ENCODE measurements at regions of chr1 and their contacts with region 1.

Region 1: DNA sequence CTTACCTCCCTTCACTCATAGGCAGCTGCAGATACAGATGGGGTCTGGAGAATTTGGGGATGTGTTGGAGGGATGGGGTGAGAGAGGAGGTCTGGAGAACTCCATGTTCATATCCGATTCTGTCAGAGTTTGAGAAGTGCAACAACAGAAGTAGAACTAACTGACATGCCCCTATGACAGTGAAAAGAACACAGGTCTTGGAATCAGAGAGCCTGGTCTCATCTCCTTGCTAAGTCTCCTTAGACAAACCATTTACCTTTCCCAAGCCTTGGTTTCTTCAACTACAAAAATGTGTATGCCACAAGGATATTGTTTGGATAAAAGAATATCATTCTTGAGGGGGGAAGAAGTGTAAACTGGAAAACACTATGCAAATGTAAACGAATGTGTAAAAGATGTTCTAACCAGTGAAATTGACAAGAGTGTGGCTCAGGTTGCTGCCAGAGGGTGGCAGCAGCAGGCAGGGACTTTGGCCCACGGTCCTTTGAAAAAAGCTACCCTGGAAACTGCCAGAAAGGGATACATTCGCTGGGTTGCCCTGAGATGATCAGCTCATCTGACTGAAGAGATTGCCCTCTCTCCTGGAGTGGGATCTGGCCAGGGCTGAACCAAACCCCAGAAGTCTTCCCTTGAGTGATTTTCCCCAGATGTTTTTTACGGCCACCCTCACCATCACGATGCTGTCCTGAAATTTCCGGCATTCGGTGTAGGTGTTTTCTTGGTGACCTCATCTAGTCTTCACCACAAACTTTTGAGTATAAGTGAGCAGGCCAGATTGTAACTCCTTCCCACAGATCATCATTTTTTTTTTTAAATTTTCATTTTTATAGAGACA is 17.0 kb upstream of the CD2 start:
- DNase-seq: peak; percentile 66 to 90 (median 73)
- ATAC-seq: peak; percentile 67
- H3K4me3 ChIP-seq: peak overlapping the region; percentile 28
- H3K4me3 Mint-ChIP-seq: peak overlapping the region; percentile 76
- H3K27ac ChIP-seq: peak overlapping the region; percentile 93 to 98
- H3K27ac Mint-ChIP-seq: peak overlapping the region; percentile 99
- H3K4me1 ChIP-seq: peaks cover 57% of the 10 kb centered on the region
- H3K4me1 Mint-ChIP-seq: peaks cover 45% of the 10 kb centered on the region
- H3K27me3 ChIP-seq: no peaks in the 10 kb centered on the region
- H3K27me3 Mint-ChIP-seq: no peaks in the 10 kb centered on the region
- CTCF ChIP-seq: peak; percentile 97

Region 2: DNA sequence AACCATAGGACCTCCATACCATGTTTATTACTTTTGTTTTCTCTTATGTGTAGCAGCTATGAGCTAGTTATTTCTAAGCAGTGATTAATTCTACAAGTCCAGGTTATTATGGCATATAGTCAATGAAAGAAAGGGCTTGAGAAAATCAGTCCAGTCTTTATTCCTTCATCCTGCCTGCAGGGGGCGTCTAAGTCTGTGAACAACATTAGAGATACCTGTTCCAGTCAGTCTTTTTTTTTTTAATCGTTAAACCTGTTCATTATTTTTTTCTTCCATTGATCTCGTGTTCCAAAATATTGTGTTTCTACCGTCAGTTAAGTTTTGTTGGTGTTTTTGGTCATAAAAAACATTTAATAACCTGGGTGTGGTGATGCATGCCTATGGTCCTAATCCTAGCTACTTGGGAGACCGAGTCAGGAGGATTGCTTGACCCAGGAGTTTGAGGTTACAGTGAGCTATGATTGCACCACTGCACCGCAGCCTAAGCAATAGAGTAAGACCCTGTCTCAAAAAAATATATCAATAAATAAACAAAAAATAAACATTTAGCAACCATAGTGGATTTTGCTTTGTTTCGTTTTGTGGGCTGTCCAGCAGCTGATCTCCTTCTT is 12.4 kb before region 1 on chr1:
- CTCF ChIA-PET with region 1: interaction called, 17 read pairs
- POLR2A ChIA-PET with region 1: interaction called, 10 read pairs
- intact Hi-C with region 1: no loop called
- DNase-seq: peak; percentile 56 to 90 (median 72)
- ATAC-seq: no peak
- H3K4me3 ChIP-seq: no peak overlapping the region
- H3K4me3 Mint-ChIP-seq: no peak overlapping the region
- H3K27ac ChIP-seq: no peak overlapping the region
- H3K27ac Mint-ChIP-seq: no peak overlapping the region
- H3K4me1 ChIP-seq: peaks cover 3% of the 10 kb centered on the region
- H3K4me1 Mint-ChIP-seq: peaks cover 22% of the 10 kb centered on the region
- H3K27me3 ChIP-seq: no peaks in the 10 kb centered on the region
- H3K27me3 Mint-ChIP-seq: no peaks in the 10 kb centered on the region
- CTCF ChIP-seq: peak; percentile 97

Region 3: DNA sequence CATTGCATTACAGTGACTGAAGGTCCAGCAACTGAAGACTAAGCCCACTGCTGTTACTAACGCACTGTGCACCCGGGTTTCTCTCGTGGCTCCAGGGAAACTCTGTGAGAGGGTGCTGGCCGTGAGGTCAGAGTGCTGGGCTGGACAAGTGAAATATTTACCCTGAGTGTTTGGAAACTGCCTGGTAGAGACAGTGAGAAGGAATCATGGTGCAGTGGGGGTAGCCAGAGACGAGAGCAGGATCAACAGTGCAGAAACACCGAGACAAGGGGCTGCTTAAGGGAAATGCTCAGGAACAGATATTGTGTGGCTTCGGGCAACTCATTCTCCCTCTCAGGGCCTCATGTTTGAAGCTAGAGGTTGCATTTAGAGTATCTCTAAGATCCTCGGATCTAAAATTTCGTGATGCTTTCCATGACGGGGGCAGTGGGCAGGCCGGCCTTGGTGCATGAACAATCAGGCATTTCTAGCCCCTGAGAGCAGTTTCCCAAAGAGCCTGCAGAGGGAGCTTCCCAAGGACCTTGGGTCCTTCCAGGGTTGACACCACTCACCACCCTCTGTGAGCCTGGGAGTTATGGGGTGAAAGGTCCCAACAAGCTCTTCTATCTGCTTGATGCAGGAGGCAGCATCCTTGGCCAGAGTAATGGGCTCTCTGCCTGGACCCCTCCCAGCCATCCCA is 26.7 kb after region 1 on chr1:
- CTCF ChIA-PET with region 1: interaction called, 62 read pairs
- POLR2A ChIA-PET with region 1: interaction called, 235 read pairs
- intact Hi-C with region 1: loop called (anchors 1 to 2 kb)
- DNase-seq: peak in 6 of 14 experiments; percentile 20 to 74 (median 52)
- ATAC-seq: peak; percentile 18
- H3K4me3 ChIP-seq: peak overlapping the region; percentile 31
- H3K4me3 Mint-ChIP-seq: peak overlapping the region; percentile 83
- H3K27ac ChIP-seq: peak overlapping the region; percentile 88 to 89
- H3K27ac Mint-ChIP-seq: peak overlapping the region; percentile 99
- H3K4me1 ChIP-seq: peaks cover 96% of the 10 kb centered on the region
- H3K4me1 Mint-ChIP-seq: peaks cover 97% of the 10 kb centered on the region
- H3K27me3 ChIP-seq: no peaks in the 10 kb centered on the region
- H3K27me3 Mint-ChIP-seq: no peaks in the 10 kb centered on the region
- CTCF ChIP-seq: peak; percentile 52

Region 4: DNA sequence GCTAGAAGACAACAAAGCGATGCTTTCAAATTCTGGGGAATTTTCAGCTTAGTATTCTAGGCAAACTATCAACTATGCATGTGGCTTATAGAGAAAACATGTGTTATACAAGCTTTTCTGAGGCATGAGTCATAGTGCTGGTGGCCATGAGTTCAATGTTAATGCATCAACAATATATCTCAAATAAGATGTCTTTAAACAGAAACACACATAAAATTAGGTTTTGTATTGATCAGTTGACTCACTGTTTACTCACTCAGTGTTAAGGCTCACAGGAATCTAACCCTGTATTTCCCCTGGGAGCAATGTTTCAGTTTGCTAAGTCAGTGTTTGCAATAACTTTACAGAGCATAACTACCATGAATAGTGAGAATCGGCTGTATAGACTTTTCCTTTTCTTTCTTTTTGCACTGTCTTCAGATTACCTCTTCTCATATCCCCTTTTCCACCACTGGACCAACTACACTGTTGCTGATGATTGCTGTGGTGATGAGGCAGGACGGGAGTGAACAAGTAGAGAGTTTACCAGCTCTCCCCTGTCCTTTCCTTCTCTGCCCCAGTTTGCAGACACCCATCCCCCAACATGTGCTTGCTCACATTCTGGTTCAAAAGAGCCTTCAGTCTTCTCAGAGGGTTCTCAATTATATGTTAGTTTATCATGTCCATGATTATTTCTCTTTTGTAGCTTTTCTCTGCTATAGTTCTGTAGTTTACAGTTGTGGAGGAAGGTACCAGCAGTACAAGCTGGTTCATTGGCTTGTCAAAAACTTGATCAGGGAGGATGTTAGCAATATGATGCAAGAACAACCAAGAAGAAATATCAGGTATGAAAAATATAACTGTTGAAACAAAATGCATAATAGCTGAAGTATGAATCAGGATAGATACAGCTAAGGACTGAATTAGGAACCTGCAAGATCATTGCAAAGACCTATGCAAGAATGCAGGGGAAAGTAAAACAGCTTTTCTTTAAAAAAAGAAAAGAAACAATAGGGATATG is 40.9 kb after region 1 on chr1:
- CTCF ChIA-PET with region 1: interaction called, 62 read pairs
- POLR2A ChIA-PET with region 1: interaction called, 235 read pairs
- intact Hi-C with region 1: no loop called
- DNase-seq: peak in 1 of 14 experiments; percentile 15
- ATAC-seq: peak; percentile 42
- H3K4me3 ChIP-seq: no peak overlapping the region
- H3K4me3 Mint-ChIP-seq: peak overlapping the region; percentile 17
- H3K27ac ChIP-seq: no peak overlapping the region
- H3K27ac Mint-ChIP-seq: peak overlapping the region; percentile 16
- H3K4me1 ChIP-seq: peaks cover 5% of the 10 kb centered on the region
- H3K4me1 Mint-ChIP-seq: peaks cover 38% of the 10 kb centered on the region
- H3K27me3 ChIP-seq: no peaks in the 10 kb centered on the region
- H3K27me3 Mint-ChIP-seq: no peaks in the 10 kb centered on the region
- CTCF ChIP-seq: no peak

Region 5: DNA sequence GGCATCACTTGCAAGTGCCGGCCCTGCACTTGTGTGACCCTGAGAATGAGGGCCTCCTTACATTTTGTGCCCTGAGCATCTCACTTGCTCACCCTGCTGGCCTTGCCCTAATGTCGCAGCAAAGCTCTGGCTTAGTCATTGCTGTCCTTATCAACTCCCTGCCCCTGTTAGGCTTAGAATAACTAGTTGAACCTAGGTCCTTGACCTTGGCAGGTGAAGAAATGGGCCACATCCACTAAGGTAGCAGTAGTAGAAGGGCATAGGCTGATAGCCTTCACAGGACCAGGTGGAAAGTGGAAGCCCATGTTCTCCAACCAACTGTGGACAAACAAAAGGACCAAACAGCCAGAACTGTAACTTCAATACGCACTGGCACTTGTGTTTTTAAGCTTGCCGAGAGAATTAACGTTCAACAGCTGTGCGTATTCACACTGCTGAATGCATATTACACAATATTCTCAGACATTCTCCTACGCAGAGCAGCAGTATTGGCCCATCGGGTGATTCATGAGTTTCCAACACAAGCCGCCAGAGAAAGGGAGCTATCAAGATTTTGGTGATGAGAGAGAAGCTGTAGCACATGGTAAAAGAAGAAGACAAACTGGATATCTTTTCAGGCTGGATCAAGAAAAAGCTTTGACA is 144.8 kb after region 1 on chr1:
- CTCF ChIA-PET with region 1: interaction called, 10 read pairs
- POLR2A ChIA-PET with region 1: interaction called, 12 read pairs
- intact Hi-C with region 1: loop called (anchors 1 to 5 kb)
- DNase-seq: peak in 6 of 14 experiments; percentile 9 to 55 (median 31)
- ATAC-seq: no peak
- H3K4me3 ChIP-seq: no peak overlapping the region
- H3K4me3 Mint-ChIP-seq: no peak overlapping the region
- H3K27ac ChIP-seq: no peak overlapping the region
- H3K27ac Mint-ChIP-seq: no peak overlapping the region
- H3K4me1 ChIP-seq: peaks cover 23% of the 10 kb centered on the region
- H3K4me1 Mint-ChIP-seq: peaks cover 3% of the 10 kb centered on the region
- H3K27me3 ChIP-seq: no peaks in the 10 kb centered on the region
- H3K27me3 Mint-ChIP-seq: no peaks in the 10 kb centered on the region
- CTCF ChIP-seq: peak; percentile 31

Region 6: GRCh38 chr1:116951200-116951935 is 214.1 kb after region 1 on chr1:
- CTCF ChIA-PET with region 1: no interaction called
- POLR2A ChIA-PET with region 1: no interaction called
- intact Hi-C with region 1: no loop called
- DNase-seq: no peak
- ATAC-seq: no peak
- H3K4me3 ChIP-seq: no peak overlapping the region
- H3K4me3 Mint-ChIP-seq: no peak overlapping the region
- H3K27ac ChIP-seq: no peak overlapping the region
- H3K27ac Mint-ChIP-seq: no peak overlapping the region
- H3K4me1 ChIP-seq: no peaks in the 10 kb centered on the region
- H3K4me1 Mint-ChIP-seq: no peaks in the 10 kb centered on the region
- H3K27me3 ChIP-seq: no peaks in the 10 kb centered on the region
- H3K27me3 Mint-ChIP-seq: no peaks in the 10 kb centered on the region
- CTCF ChIP-seq: no peak

Measured in CD4-positive, alpha-beta T cell (primary cell).